ENCODE measurements at regions of chr5 and their contacts with region 1.

Region 1: DNA sequence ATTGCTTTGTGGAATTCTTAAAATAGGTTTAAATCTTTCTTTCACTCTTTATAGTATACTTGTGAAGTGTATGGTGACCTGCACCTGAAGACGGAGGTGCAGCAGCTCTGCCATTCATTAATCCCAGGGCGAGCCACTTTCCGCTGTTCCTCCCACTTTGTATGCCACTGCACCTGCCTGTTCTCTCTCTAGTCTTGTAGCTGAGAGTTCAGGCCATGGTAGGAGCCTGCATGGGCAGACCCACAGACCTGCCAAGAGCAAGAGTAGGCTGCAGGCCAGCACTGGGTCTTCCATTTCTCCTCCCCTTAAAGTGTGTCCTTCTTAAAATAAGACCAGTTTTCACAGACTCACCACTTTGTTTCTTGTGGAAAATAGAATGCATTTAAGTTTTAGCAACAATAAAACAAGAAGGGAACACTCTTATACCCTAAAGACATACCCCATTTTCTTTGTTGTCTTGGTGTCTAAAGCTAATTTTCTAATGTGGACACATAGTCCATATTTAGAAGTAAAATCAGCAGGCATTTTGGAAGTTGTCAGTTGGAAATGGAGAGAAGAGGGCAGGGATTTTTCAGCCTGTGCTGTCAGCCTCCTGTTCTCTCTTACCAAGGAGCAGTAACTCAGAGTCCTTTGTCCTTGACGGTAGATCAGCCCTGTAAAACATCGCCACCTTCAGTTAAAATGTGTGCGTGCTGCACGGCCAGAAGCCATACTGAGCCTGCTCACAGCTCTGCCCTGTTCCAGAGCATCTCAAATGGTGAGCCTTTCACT is 103.2 kb downstream of the SNCAIP start:
- DNase-seq: peak; percentile 60 to 77 (median 67)
- H3K4me3 ChIP-seq: no peak overlapping the region
- H3K27ac ChIP-seq: peak overlapping the region in 1 of 2 donors; percentile 41
- H3K4me1 ChIP-seq: peaks cover 10% of the 10 kb centered on the region
- H3K27me3 ChIP-seq: no peaks in the 10 kb centered on the region
- CTCF ChIP-seq: peak; percentile 67 to 71 (median 69)
- EP300 ChIP-seq: no peak
- POLR2A ChIP-seq: no peak

Region 2: DNA sequence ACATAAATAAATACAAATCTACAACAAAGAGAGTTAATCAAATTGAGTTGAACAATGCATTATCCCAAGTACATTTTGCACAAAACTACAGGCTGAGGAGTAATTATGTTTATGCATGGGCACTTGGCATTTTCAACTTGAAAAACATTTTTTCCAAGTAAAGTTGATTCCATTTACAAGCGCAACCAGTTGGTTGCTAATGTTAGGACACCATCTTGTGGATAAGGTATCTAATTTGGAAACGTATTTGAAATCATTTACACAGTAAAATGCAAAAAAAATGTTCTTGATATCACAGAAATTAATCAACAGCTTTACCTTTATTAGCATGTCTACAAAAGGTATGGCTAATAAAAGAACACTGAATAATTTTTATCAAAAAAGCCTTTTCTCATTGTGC is 544.7 kb before region 1 on chr5:
- intact Hi-C with region 1: no loop called
- DNase-seq: no peak
- H3K4me3 ChIP-seq: no peak overlapping the region
- H3K27ac ChIP-seq: no peak overlapping the region
- H3K4me1 ChIP-seq: no peaks in the 10 kb centered on the region
- H3K27me3 ChIP-seq: no peaks in the 10 kb centered on the region
- CTCF ChIP-seq: no peak
- EP300 ChIP-seq: no peak
- POLR2A ChIP-seq: no peak

Region 3: DNA sequence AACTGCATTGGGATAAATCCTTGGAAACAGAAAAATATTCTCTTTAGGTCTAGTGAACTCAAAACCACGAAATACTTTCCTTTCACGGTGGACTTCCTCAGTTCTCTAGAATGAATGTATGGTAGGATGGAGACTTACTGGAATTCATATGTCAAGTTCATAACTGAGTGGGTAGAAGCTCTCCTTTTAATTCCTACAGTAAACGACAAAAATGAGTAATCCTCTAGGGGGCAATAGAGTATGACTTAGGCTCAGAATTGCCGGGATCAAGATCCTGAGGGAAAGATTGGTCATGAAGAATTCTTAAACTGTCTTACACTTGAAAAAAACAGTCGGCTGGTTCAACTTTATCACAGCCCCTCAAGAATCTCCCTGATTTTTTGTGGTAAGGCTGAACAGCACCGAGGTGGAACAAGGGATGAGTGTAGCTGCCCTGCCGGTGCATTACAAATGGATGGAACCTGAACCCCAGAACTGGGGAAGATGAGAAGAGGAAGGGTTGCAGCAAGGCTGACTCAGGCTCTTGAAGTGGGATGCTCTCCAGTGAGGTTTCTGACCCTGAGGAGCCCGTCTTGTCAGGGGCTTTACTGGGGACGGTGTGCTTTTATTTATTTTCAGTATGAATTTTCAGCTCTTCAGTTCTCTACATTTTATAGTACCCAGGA is 323.1 kb before region 1 on chr5:
- intact Hi-C with region 1: loop called in 1 of 4 experiments (anchors 10 kb)
- DNase-seq: no peak
- H3K4me3 ChIP-seq: no peak overlapping the region
- H3K27ac ChIP-seq: no peak overlapping the region
- H3K4me1 ChIP-seq: no peaks in the 10 kb centered on the region
- H3K27me3 ChIP-seq: no peaks in the 10 kb centered on the region
- CTCF ChIP-seq: no peak
- EP300 ChIP-seq: no peak
- POLR2A ChIP-seq: no peak

Region 4: DNA sequence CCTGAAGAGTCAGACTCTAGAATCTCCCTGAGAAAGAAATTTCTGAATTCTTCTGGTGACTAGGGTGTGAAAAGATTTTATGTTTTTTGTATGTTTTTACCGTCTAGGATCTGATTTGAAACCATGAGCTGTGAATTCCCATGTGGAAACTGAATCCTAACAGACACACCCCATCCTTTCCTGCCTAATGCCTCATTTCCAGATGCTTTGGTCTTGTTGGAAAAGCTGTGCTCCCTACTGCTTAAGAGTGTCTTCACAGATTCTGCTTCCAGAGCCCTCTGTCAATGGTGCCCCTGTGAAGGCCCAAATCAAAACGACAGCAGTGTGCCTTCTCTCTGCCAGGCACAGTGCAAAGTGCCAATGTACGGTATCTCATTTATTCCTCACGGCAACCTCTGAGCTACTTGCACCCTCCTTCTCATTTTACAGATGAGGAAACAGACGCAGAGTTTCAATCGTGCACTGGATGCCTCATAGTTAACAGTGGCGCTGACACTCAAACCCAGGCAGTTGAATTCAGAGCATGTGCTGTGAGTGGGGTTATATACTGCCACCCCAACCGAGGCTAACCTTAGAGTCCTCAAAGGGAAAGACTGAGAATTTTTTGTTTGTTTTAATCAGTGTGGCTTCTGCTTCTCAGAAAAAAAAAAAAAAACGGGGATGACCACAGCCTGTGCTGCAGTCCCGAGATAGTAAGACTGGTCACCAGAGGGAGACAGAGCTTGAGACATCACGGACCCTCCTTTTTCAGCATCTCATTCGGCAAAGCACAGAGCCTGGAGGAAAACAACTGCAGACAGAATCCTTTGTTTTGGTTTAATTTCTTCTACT is 85.2 kb after region 1 on chr5:
- intact Hi-C with region 1: loop called in 1 of 4 experiments (anchors 5 kb)
- DNase-seq: peak in 4 of 5 donors; percentile 47 to 73 (median 59)
- H3K4me3 ChIP-seq: no peak overlapping the region
- H3K27ac ChIP-seq: peak overlapping the region; percentile 20 to 74
- H3K4me1 ChIP-seq: peaks cover 10% of the 10 kb centered on the region
- H3K27me3 ChIP-seq: no peaks in the 10 kb centered on the region
- CTCF ChIP-seq: peak; percentile 38 to 53 (median 39)
- EP300 ChIP-seq: no peak
- POLR2A ChIP-seq: no peak

Measured in ovary (tissue), 10 donors.